Heart right ventricle (tissue), 16 donors: ENCODE measurements at regions of chr21 and their contacts with region 1.

Region 1: DNA sequence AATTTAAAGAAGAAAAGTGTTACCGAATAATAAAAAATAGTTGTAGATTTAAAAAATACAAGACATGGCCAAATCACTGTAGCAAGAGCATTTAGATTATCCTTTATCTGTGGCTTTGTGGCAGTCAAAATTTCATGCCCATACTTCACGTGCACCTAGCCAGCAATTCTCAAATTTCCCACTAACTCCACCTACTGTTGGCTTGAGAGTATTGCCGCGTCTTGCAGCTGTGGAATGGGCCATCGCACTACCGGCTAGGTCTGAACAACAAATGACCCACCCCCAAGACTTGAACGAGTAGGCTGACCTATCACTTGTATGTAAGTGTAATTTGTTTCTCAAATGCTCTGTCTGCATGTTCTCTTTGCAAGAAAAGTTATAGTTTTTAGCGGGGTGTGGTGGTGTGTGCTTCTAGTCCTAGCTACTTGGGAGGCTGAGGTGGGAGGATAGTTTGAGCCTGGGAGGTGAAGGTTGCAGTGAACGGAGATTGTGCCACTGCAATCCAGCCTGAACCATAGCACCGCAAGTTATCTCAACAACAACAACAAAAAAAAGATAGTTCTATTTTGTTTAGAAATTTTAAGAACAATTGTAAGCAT is 4.1 kb downstream of the KRTAP13-4 start:
- DNase-seq: no peak
- ATAC-seq: peak in 1 of 8 donors; percentile 58
- H3K4me3 ChIP-seq: no peak overlapping the region
- H3K27ac ChIP-seq: no peak overlapping the region
- H3K4me1 ChIP-seq: no peaks in the 10 kb centered on the region
- H3K27me3 ChIP-seq: no peaks in the 10 kb centered on the region
- CTCF ChIP-seq: peak in 8 of 9 donors; percentile 15 to 59 (median 52)

Region 2: GRCh38 chr21:30044445-30045064 is 389.6 kb before region 1 on chr21:
- intact Hi-C with region 1: loop called in 1 of 10 experiments (anchors 10 kb)
- DNase-seq: peak in 1 of 2 donors; percentile 6
- ATAC-seq: no peak
- H3K4me3 ChIP-seq: no peak overlapping the region
- H3K27ac ChIP-seq: no peak overlapping the region
- H3K4me1 ChIP-seq: no peaks in the 10 kb centered on the region
- H3K27me3 ChIP-seq: no peaks in the 10 kb centered on the region
- CTCF ChIP-seq: peak; percentile 70 to 88 (median 82)

Region 3: DNA sequence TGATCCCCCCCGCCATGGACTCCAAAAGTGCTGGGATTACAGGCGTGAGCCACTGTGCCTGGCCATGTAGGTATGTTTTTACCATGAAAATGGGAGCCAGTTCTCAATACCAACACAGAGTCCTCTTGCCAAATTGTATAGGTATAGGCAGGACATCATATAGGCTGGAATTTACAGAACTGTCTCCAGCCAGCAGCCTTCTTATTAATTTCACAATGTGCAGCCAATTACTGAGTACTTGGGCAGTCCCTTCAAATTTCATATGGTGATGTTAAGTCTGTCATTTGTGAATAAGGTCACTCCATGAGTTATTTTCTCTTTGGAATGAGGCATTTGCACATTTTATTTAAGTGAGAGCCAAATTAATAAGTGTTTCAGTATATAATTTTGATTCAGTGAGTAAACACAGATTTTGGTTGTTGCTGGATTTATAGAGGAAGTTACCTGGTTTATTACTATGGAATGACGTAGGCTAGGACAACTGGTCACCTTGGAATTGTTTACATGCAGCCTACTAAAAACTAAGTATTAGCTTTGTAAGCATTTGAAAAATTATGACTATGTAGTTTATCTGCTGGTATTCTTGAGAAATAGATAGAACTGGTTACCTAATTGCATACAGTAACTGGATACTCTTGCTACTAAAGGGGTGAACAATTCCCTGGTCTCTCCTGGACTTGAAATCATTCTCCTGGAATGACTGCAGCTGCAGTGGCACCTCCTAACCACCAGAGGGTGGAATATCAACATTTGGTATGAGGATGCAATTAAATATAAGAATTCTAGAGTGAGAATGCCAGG is 93.5 kb before region 1 on chr21:
- intact Hi-C with region 1: loop called in 1 of 10 experiments (anchors 10 kb)
- DNase-seq: peak in 1 of 2 donors; percentile 20
- ATAC-seq: no peak
- H3K4me3 ChIP-seq: no peak overlapping the region
- H3K27ac ChIP-seq: no peak overlapping the region
- H3K4me1 ChIP-seq: no peaks in the 10 kb centered on the region
- H3K27me3 ChIP-seq: no peaks in the 10 kb centered on the region
- CTCF ChIP-seq: peak; percentile 58 to 86 (median 80)

Region 4: GRCh38 chr21:30502041-30502440 is 67.9 kb after region 1 on chr21 and contains the start of gene KRTAP19-5:
- intact Hi-C with region 1: no loop called
- DNase-seq: no peak
- ATAC-seq: no peak
- H3K4me3 ChIP-seq: no peak within 1 kb of the TSS
- H3K27ac ChIP-seq: no peak within 1 kb of the TSS
- H3K4me1 ChIP-seq: no peaks in the 10 kb centered on the region
- H3K27me3 ChIP-seq: no peaks in the 10 kb centered on the region
- CTCF ChIP-seq: no peak
- total RNA-seq, gene KRTAP19-5: not detected

Region 5: GRCh38 chr21:30563072-30563471 is 128.9 kb after region 1 on chr21:
- intact Hi-C with region 1: no loop called
- DNase-seq: no peak
- ATAC-seq: no peak
- H3K4me3 ChIP-seq: no peak overlapping the region
- H3K27ac ChIP-seq: no peak overlapping the region
- H3K4me1 ChIP-seq: no peaks in the 10 kb centered on the region
- H3K27me3 ChIP-seq: no peaks in the 10 kb centered on the region
- CTCF ChIP-seq: no peak